WTC11 (cell line): ENCODE measurements at regions of chr14 and their contacts with region 1.

Region 1: GRCh38 chr14:70816525-70816924 is 7.2 kb upstream of the MAP3K9 start:
- DNase-seq: no peak
- ATAC-seq: peak; percentile 16; the same call in 1 of the 2 replicates
- H3K4me3 Mint-ChIP-seq: no peak overlapping the region
- H3K27ac Mint-ChIP-seq: no peak overlapping the region
- H3K4me1 Mint-ChIP-seq: peaks cover 16% of the 10 kb centered on the region
- H3K27me3 Mint-ChIP-seq: peaks cover 29% of the 10 kb centered on the region
- CTCF ChIP-seq: no peak

Region 2: DNA sequence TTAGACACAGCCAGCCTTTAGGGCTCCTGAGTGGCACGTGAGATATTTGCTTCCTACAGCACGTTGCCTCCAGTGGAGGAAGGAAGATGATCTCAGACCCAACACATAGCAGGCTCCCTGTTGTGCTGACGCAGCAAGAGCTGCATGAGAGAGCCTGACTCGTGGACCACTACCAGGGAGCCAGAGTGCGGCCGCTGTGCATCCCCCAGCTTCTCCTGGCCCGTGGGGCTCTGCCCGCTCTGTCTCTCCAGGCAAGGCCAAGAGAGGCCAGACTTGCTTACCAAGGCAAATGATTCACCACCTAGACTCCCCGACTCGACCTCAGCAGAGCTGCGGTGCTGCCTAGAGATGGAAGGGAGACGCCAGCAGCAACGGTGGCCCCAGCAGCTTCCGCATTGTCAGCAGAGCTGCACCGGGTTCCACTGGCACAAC is 44.7 kb before region 1 on chr14:
- CTCF ChIA-PET with region 1: interaction called, 10 read pairs
- POLR2A ChIA-PET with region 1: no interaction called
- DNase-seq: peak; percentile 22
- ATAC-seq: peak; percentile 71
- H3K4me3 Mint-ChIP-seq: no peak overlapping the region
- H3K27ac Mint-ChIP-seq: peak overlapping the region; percentile 48; the same call in 1 of the 2 replicates
- H3K4me1 Mint-ChIP-seq: peaks cover 40% of the 10 kb centered on the region
- H3K27me3 Mint-ChIP-seq: no peaks in the 10 kb centered on the region
- CTCF ChIP-seq: no peak

Region 3: GRCh38 chr14:70972107-70972976 is 155.8 kb after region 1 on chr14:
- CTCF ChIA-PET with region 1: interaction called, 10 read pairs
- POLR2A ChIA-PET with region 1: no interaction called
- DNase-seq: peak; percentile 85
- ATAC-seq: peak; percentile 81
- H3K4me3 Mint-ChIP-seq: no peak overlapping the region
- H3K27ac Mint-ChIP-seq: no peak overlapping the region; the same call in 1 of the 2 replicates
- H3K4me1 Mint-ChIP-seq: peaks cover 11% of the 10 kb centered on the region
- H3K27me3 Mint-ChIP-seq: no peaks in the 10 kb centered on the region
- CTCF ChIP-seq: peak; percentile 87

Region 4: GRCh38 chr14:71089971-71090370 is 273.4 kb after region 1 on chr14:
- CTCF ChIA-PET with region 1: no interaction called
- POLR2A ChIA-PET with region 1: no interaction called
- DNase-seq: no peak
- ATAC-seq: no peak
- H3K4me3 Mint-ChIP-seq: no peak overlapping the region
- H3K27ac Mint-ChIP-seq: no peak overlapping the region
- H3K4me1 Mint-ChIP-seq: no peaks in the 10 kb centered on the region
- H3K27me3 Mint-ChIP-seq: no peaks in the 10 kb centered on the region
- CTCF ChIP-seq: no peak